ENCODE measurements at regions of chr17 and their contacts with region 1.

Region 1: DNA sequence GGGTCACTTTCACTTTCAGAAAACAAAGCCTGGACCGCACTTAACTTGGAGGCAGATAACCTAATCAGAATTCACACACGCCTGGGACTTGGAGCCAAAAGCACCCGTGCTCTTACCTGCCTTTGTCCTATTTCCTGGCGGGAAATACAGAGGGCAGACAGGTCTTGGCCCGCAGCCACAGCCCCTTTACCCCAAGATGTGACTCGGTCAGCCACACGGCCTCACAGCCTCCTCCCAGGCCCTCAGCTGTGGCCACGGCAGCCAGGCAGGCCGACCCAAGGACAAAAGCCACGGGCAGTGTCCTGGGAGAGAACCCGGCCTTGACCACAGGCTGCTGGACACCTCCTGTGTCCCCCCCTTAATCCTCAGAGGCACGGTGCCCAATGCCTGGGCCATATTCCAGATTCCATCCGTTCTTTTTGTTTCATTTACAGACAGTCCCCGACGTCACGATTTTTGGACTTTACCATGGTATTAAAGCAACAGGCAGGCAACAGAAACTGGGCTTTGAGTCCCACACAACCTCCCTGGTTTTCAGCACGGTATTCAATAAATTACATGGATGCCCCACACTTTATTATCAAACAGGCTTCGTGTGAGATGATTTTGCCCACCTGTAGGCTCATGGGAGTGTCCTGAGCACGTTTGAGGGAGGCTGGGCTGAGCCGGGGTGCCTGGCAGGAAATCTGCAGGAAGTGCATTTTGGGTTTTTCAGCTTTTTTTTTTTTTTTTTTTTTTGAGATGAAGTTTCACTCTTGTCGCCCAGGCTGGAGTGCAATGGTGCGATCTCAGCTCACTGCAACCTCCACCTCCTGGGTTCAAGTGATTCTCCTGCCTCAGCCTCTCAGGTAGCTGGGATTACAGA is 30.0 kb upstream of the GAA start:
- DNase-seq: peak; percentile 68 to 86
- ATAC-seq: peak; percentile 79
- H3K4me3 ChIP-seq: peak overlapping the region; percentile 14 to 36
- H3K27ac ChIP-seq: peak overlapping the region in 1 of 2 donors; percentile 55
- H3K4me1 ChIP-seq: no peaks in the 10 kb centered on the region
- H3K27me3 ChIP-seq: no peaks in the 10 kb centered on the region

Region 2: DNA sequence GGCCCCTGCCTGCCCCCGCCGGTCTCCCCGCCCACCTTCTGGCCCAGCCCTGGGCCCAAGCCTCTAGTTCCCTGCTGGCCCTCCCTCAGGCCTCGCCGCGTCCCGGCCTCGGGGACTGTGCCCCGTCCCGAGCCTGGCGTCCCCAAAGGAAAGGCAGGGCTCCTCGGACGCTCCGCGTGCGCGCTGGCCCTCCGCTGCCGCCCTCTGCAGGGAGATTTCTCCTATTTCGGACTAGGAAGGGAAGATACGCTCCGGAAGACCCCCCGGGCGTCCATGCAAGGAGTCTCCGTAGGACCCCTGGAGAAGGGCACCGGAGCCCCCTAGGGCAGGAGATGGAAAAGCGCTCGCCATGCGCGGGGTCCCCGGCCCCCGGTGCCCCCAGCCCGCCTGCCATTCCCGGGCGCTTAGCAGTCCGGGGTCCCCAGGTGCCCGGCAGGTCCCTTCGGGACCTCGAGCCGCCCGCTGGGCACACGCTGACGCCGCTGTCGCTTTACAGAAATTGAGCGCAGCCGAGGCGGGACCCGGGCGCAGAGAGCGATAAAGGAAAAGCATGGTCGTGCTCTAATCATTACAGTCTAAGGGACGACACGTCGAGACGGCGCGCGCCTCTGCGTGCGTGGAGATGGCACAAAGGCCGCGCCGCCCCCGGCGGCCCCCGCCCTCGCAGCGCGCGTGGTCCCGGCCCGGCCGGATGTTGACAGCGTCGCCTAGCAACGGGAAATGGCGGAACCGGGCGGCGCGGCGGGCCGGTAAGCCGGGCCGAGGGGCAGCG is 35.2 kb before region 1 on chr17 and contains the start of gene CCDC40:
- intact Hi-C with region 1: loop called in 1 of 2 experiments (anchors 2 kb)
- DNase-seq: peak; percentile 93 to 95
- ATAC-seq: peak; percentile 95
- H3K4me3 ChIP-seq: peak within 1 kb of the TSS; percentile 86 to 98
- H3K27ac ChIP-seq: peak within 1 kb of the TSS in 1 of 2 donors; percentile 75
- H3K4me1 ChIP-seq: no peaks in the 10 kb centered on the region
- H3K27me3 ChIP-seq: no peaks in the 10 kb centered on the region
- total RNA-seq, gene CCDC40: 3.3 to 11.3 TPM